Activated T-helper 1 cell treated with anti-CD3 and anti-CD28 coated beads, Interleukin-12 subunit alpha, Interleukin-12 subunit beta, Interleukin-2, Interleukin-4 antibody, amounts not matched to agents 30 ng/mL and 10 ng/mL and 1 ng/mL, durations not matched to agents 14 hours and 24 hours and 36 hours (primary cell): ENCODE measurements at regions of chr11 and their contacts with region 1.

Region 1: GRCh38 chr11:130314750-130315285 is at the start of gene ZBTB44:
- DNase-seq: peak; percentile 82
- H3K4me3 Mint-ChIP-seq: peak within 1 kb of the TSS; percentile 93
- H3K27ac Mint-ChIP-seq: peak within 1 kb of the TSS; percentile 95
- H3K4me1 Mint-ChIP-seq: peaks cover 44% of the 10 kb centered on the region
- H3K27me3 Mint-ChIP-seq: peaks cover 3% of the 10 kb centered on the region
- total RNA-seq, gene ZBTB44: 32.9 and 33.0 TPM in 2 replicates

Region 2: DNA sequence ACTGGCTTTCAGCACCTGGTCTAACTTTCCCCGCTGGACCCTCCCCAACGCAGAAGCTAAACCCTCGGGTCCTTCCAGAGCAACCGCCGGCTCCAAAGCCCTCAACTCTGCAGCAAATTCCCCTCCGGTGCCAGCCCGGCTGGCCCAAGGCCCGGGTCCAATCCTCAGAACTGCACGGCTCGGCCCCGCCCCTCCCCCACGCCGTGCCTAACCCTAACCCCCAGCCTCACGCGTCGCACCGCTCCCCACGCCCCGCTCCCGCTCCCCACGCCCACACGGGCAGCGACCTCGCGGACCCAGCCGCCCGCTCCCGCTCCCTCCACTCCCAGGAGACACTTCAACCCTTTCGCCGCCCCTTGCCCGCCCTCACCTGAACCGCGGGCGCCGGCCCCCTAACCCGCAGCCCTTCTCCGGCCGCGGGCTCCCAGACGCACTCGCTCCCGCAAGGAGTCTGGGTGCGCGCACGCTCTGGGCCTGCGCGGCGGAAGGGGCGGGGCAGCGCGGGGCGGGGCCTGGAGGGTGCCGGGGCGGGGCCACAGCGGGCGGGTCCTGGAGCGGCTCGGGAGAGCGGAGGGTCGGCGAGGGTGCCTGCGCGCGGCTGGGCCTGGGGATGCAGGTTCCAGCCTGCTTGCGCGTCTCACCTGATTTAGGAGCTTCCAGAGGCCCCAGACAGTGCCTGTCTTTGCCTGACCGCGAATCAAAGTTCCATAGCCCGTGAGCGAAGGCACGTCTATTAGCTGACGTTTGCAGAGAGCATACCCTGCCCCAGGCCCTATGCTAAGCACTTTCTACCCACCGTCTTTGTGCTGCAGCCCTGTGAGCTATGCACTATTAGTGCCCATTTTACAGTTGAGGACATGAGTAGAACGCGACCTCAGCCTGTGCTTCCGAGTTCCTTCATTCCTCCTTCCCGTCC is 419.4 kb before region 1 on chr11 and contains the start of gene NFRKB:
- intact Hi-C with region 1: loop called (anchors 1 kb)
- DNase-seq: peak; percentile 84
- H3K4me3 Mint-ChIP-seq: peak within 1 kb of the TSS; percentile 92
- H3K27ac Mint-ChIP-seq: peak within 1 kb of the TSS; percentile 84
- H3K4me1 Mint-ChIP-seq: peaks cover 41% of the 10 kb centered on the region
- H3K27me3 Mint-ChIP-seq: peaks cover 5% of the 10 kb centered on the region
- total RNA-seq, gene NFRKB: 46.8 and 48.5 TPM in 2 replicates

Region 3: DNA sequence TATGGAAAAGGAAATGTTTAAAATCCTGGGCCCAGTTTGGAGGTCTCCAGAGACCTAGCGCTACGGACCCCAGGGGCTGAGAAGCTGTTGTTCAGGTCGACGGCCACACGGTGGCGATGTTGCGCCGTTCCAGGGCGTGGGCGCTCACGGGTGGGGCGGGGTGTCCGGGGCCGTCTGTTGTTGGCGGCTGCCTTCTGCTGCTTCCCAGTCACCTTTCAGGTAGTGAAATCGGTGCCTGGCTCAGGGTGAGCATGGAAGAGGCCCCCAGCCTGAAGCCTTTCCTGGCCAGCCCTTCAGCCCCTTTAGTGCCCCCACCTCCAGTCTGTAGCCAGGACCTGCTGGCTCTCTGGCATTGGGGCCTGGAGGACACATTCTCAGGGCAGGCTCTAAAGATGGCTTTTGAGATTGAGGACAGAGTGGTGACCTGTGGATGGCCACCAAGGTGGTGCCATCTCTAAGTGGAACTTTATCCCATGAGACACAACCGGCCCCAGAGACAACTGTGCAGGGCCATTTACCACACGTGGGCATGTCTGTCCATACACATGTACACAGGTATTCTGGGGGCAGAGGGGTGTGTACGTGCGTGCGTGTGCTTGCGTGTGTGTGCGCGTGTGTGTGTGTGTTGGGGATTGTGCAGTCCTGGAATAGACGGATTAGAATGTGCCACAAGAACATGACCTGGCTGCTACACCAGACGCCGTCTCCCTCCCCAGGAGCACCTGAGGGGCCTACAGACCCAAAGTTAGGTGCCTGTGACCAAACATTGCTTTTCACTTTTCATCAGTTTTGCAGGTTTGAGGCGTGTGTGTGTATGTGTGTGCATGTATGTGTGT is 101.5 kb before region 1 on chr11:
- intact Hi-C with region 1: loop called (anchors 1 kb)
- DNase-seq: peak; percentile 60
- H3K4me3 Mint-ChIP-seq: no peak overlapping the region
- H3K27ac Mint-ChIP-seq: no peak overlapping the region
- H3K4me1 Mint-ChIP-seq: no peaks in the 10 kb centered on the region
- H3K27me3 Mint-ChIP-seq: peaks cover 6% of the 10 kb centered on the region

Region 4: GRCh38 chr11:130278151-130278550 is 36.7 kb before region 1 on chr11:
- intact Hi-C with region 1: loop called (anchors 5 kb)
- DNase-seq: no peak
- H3K4me3 Mint-ChIP-seq: peak overlapping the region; percentile 7
- H3K27ac Mint-ChIP-seq: no peak overlapping the region
- H3K4me1 Mint-ChIP-seq: peaks cover 26% of the 10 kb centered on the region
- H3K27me3 Mint-ChIP-seq: no peaks in the 10 kb centered on the region

Region 5: DNA sequence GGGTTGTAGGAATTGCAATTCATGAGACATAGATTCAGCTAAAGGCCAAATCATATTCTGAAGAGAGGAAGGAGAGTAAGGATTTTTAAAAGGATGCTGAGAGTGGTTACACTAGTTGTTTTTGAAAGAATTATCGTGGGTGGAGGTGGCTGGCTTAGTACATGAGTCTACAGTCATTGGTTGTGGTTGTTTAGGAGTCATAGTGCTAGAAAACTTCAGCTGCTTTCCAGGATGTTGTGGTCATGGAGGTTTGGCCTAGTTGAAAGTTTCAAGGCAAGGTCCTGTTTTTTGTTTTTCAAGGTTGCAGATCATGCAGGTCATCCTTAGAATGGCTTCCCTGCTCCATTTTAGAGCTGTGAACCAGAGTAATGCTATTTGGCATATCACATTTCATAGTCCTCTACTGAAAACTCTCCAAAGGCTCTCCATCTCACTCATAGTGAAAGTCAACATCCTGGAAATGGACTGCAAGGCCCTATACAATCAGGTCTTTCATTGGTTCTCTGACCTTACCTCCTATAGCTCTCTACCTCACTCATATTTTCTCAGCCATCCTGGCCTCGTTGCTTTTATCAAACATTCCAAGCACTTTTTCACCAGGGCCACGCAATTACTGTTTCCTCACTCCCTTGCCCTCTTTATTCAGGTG is 26.0 kb after region 1 on chr11:
- intact Hi-C with region 1: loop called (anchors 1 kb)
- DNase-seq: peak; percentile 59
- H3K4me3 Mint-ChIP-seq: no peak overlapping the region
- H3K27ac Mint-ChIP-seq: peak overlapping the region; percentile 83
- H3K4me1 Mint-ChIP-seq: peaks cover 25% of the 10 kb centered on the region
- H3K27me3 Mint-ChIP-seq: no peaks in the 10 kb centered on the region

Region 6: GRCh38 chr11:130434521-130435223 is 119.9 kb after region 1 on chr11:
- intact Hi-C with region 1: loop called (anchors 2 kb)
- DNase-seq: peak; percentile 58
- H3K4me3 Mint-ChIP-seq: no peak overlapping the region
- H3K27ac Mint-ChIP-seq: no peak overlapping the region
- H3K4me1 Mint-ChIP-seq: peaks cover 19% of the 10 kb centered on the region
- H3K27me3 Mint-ChIP-seq: peaks cover 24% of the 10 kb centered on the region

Region 7: DNA sequence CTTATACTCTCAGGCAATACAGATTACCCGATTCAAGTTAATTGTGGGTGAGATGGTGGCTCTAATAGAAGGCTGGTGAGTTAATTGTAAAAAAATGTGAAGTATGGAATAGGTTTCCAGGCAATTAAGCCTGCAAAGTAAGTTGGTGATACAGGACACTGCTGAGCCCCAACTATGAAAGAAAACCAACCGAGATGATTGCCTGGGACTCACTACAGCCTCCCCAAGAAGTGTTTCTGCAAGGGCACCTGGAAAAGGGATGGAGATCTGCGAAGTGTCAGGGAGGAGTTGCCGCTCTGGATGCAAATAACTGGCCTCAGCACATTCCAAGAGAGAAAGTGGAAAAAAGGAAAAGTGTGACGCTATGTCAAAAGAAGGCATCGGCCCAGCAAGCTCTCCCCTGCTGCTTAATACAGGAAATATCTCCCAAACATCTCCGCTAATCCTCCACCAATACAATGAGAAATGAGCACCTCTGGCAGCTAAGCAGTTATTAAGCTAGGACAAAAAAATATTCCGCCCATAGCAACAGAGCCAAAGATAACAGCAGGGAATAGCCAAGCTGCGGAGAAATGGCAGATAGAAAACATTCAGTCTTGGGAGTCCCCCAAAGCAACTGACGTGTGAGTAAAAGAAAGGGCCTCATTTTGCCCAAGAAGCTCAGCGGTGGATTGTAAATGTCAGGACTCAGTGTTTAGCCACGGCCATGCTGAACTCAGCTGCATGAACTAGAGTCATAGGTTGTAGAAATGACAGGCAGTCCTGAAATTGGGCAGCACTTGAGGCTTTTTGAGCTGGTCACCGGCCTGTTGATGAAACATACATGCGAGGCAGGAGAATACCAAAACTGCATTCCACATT is 467.8 kb after region 1 on chr11:
- intact Hi-C with region 1: no loop called
- DNase-seq: no peak
- H3K4me3 Mint-ChIP-seq: no peak overlapping the region
- H3K27ac Mint-ChIP-seq: no peak overlapping the region
- H3K4me1 Mint-ChIP-seq: no peaks in the 10 kb centered on the region
- H3K27me3 Mint-ChIP-seq: peaks cover under 1% of the 10 kb centered on the region

Region 8: DNA sequence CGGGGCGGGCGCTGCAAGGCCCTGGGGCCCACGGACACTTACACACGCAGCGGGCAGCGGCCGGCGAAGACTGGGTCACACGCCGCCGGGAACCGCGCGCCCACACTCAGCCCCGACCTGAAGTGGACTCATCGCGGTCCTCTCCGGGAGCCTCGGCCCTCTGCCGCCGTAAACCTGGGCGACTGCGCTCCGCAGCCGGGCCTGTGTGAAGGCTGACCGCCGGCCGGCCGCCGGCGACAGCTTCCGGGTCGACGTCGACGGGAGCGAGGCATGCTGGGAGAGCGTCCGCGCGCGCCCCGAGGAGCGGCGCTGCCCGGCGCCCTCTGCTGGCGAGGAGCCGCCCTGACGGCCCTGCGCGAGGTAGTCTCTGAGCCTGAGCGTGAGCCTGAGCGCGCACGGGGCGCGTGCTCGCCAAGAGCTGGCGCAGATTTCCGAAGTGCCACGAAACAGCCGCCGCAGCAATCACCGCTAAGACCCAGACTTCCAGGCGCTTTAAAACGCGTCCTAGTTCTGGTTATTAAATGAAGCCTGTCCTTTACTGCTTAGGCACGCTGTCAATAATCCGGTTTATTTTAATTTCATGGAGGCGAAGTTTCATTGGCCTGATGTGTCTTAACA is 601.5 kb after region 1 on chr11 and contains the start of gene SNX19:
- intact Hi-C with region 1: loop called (anchors 1 kb)
- DNase-seq: peak; percentile 90
- H3K4me3 Mint-ChIP-seq: peak within 1 kb of the TSS; percentile 87
- H3K27ac Mint-ChIP-seq: peak within 1 kb of the TSS; percentile 63
- H3K4me1 Mint-ChIP-seq: peaks cover 33% of the 10 kb centered on the region
- H3K27me3 Mint-ChIP-seq: peaks cover 8% of the 10 kb centered on the region
- total RNA-seq, gene SNX19: 58.5 and 60.7 TPM in 2 replicates